Endothelial cell of umbilical vein (primary cell): ENCODE measurements at regions of chr20 and their contacts with region 1.

Region 1: DNA sequence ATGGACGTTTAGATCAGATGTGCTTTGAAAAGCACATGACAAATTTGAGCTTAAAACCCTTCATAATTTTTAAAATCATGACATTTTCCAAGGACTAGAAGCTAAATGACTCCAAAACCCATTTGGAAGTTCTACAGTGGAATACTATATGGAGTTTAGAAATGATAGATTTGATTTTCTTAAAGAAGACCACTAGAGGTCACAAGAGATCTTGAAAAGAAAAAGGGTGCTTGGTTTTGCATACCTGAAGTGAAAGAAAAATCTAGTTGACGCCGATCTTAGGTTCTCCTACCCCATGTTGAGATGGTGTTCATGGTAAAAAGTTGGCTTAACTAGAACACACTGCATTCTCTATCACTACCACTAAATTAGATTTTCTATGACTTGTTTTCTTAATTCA is 31.5 kb downstream of the CFAP61 start:
- DNase-seq: peak; percentile 33
- H3K4me3 ChIP-seq: no peak overlapping the region
- H3K27ac ChIP-seq: no peak overlapping the region
- H3K4me1 ChIP-seq: no peaks in the 10 kb centered on the region
- H3K27me3 ChIP-seq: peaks cover 5 to 15% of the 10 kb centered on the region in 2 experiments
- CTCF ChIP-seq: peak in 1 of 2 donors; percentile 13
- POLR2A ChIP-seq: no peak

Region 2: DNA sequence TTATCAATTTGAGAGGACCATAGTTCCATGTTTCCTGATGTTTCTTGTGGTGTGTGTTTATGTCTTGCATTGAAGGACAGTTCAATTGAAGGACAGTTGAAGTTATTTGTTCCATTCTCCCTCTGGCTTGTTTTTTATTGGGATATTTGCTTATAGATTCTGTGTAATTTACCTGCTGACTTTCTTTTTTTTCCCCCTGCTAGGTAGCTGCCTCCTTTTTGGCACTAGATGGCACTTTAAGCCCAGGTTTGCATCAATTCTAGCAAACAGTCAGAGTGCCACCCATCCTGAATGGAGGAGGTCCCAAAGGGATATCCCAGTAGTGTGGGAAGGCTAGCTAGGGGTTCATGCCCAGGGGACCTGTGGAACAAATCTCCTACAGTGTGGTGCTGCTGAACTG is 46.6 kb after region 1 on chr20:
- CTCF ChIA-PET with region 1: no interaction called
- POLR2A ChIA-PET with region 1: no interaction called
- dilution Hi-C with region 1: no loop called
- intact Hi-C with region 1: loop called (anchors 10 kb)
- DNase-seq: peak; percentile 12
- H3K4me3 ChIP-seq: no peak overlapping the region
- H3K27ac ChIP-seq: no peak overlapping the region
- H3K4me1 ChIP-seq: peaks cover 6% of the 10 kb centered on the region
- H3K27me3 ChIP-seq: peaks cover 1 to 4% of the 10 kb centered on the region in 2 experiments
- CTCF ChIP-seq: peak in 1 of 2 donors; percentile 1
- POLR2A ChIP-seq: no peak